Posterior cingulate gyrus (tissue), 11 donors: ENCODE measurements at regions of chr14 and their contacts with region 1.

Region 1: DNA sequence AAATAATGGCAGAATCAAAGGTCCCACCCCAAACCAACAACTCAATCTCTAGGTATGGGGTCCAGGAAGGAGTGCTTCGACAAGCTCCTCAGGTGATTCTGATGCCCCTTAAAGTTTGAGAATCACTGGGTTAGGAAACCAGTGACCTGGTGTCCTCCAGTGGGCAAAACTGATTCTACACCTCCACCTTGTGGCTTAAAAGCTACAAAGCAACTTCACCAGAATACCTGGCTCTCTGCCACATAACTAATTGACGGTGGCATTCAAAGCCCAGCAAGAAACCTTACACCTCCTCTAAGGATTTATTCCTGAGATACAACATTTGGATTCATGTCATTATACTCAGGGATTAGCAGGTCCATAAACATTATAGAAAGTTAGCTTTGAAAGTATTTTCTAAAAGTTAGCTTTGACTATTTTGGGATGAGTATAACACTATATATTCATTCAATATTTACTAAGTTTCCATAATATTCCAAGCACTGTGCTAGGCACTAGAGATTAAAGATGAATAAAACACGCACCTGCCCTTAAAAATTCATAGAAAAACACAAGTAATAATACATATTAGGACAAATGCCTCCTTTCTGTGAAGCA is 45.4 kb downstream of the DCAF5 start:
- DNase-seq: no peak

Region 2: GRCh38 chr14:68862954-68863594 is 244.4 kb before region 1 on chr14:
- intact Hi-C with region 1: loop called (anchors 5 kb)
- DNase-seq: peak; percentile 54 to 95 (median 78)

Region 3: DNA sequence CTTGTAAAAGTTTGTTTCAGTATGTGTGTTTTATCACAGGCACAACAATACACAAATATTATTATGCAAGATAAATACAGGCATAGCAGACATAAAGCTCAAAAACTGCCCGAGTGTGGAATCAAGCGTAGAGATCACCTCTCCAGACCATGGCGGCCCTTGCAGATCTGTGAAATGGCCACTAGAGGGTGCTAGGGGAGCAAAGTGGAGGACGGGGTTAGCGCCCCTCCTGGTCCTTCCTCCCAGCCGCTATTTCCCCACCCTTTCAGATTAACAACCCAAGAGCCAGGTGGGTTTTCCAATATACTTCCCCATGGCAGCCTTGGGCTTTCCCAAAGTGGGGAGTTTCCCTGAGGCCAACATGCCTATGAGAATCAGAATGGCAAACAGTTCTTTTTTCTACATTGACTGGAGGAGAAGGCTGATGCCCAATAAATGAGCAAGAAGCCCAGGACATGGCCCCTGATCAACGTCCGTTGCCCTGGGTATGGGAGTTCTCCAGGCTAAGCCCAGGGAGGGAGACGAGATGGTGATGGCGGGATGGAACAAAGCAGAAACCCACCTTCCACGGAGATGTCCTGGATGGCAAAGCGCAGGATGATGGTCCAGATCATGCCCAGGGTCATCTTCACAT is 195.8 kb before region 1 on chr14:
- intact Hi-C with region 1: loop called (anchors 1 kb)
- DNase-seq: peak in 7 of 10 donors; percentile 54 to 94 (median 70)

Region 4: DNA sequence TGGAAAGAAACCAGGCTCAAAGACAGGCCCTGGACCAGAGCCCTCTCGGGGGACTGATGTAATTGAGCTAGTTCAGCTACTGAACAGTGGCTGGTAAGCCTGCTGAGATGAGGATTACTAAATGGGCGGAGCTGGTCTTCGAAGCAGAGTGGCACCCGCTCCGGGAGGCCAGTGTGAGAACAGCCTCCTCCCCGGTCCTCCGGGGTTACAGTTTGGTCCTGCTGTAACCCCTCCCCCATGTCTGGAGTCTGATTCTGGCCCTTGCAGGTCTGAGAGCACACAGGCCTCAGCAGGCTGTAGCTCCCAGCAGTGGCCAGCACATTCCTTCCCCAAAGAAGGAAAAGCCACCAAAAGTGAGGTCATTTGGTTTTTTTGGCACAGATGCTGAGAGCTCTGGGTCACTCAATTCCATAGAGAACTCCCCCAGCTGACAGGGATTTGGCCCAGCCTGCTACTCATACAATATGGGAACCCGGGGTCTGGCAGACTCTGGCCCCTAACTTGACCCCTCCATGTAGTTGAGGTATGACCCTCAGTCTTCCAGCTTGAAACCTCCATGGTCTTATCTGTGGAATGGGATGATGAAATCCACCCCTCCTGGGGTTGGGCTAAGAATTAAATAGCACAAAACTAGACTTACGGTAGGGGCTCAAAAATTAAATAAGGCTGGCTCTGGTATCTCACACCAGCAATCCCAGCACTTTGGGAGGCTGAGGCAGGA is 167.5 kb before region 1 on chr14:
- intact Hi-C with region 1: no loop called
- DNase-seq: peak in 1 of 10 donors; percentile 80

Region 5: GRCh38 chr14:69156224-69156623 is 48.7 kb after region 1 on chr14:
- intact Hi-C with region 1: no loop called
- DNase-seq: no peak